Activated naive CD4-positive, alpha-beta T cell treated with anti-CD3 and anti-CD28 coated beads for 36 hours (primary cell): ENCODE measurements at regions of chr7 and their contacts with region 1.

Region 1: GRCh38 chr7:119175911-119176627 is 951.6 kb downstream of the ANKRD7 start:
- DNase-seq: peak; percentile 51
- H3K4me3 Mint-ChIP-seq: no peak overlapping the region
- H3K27ac Mint-ChIP-seq: no peak overlapping the region
- H3K4me1 Mint-ChIP-seq: no peaks in the 10 kb centered on the region
- H3K27me3 Mint-ChIP-seq: no peaks in the 10 kb centered on the region

Region 2: GRCh38 chr7:118259115-118259514 is 917.0 kb before region 1 on chr7:
- CTCF ChIA-PET with region 1: no interaction called
- intact Hi-C with region 1: loop called (anchors 1 kb)
- DNase-seq: no peak
- H3K4me3 Mint-ChIP-seq: no peak overlapping the region
- H3K27ac Mint-ChIP-seq: no peak overlapping the region
- H3K4me1 Mint-ChIP-seq: no peaks in the 10 kb centered on the region
- H3K27me3 Mint-ChIP-seq: peaks cover 4% of the 10 kb centered on the region

Region 3: DNA sequence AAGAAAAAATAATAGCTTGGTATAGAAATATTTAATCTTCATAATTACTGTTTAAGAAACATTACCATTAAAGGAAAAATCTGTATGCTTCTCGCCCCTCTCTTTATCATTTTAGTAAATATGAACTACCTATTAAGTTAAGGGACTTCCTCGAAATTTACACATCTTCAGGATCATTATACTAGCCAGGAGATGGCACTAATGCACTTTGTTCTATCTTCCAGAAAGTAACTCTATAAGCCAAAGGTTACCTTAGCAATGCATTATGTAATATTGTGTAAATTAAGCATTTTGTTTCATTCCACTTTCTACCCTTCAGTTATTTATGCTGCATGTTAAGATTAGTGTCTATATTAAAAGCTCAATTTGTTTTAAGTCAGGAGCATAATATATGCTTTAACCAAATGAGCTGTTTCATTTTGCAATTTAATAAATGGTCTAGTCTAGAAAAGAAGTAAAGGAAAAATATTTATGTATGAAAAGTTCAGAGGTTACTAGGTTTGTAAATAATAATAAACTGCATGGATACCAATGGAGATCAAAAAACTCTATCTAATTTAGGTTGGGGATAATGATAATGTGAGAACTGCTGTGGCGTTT is 823.1 kb before region 1 on chr7:
- CTCF ChIA-PET with region 1: no interaction called
- intact Hi-C with region 1: loop called (anchors 10 kb)
- DNase-seq: no peak
- H3K4me3 Mint-ChIP-seq: no peak overlapping the region
- H3K27ac Mint-ChIP-seq: no peak overlapping the region
- H3K4me1 Mint-ChIP-seq: no peaks in the 10 kb centered on the region
- H3K27me3 Mint-ChIP-seq: peaks cover 7% of the 10 kb centered on the region

Region 4: DNA sequence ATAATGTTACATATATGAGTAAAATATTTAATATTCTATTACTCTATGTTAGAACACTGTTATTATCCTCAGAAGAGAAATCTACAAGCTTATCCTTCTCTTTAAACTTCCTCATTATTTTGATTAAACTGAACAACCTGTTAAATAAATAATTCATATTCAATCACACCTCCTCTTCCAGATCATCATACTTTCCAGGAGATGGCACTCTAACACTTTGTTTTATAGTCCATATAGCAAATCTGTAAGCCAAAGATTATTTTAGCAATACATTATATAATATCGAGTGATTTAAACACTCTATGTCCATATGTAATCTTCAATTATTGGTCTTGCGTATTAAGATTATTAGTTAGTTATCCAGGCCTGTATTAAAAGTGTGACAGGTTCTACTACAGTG is 257.5 kb before region 1 on chr7:
- CTCF ChIA-PET with region 1: interaction called, 3 read pairs
- intact Hi-C with region 1: loop called (anchors 2 kb)
- DNase-seq: no peak
- H3K4me3 Mint-ChIP-seq: no peak overlapping the region
- H3K27ac Mint-ChIP-seq: no peak overlapping the region
- H3K4me1 Mint-ChIP-seq: no peaks in the 10 kb centered on the region
- H3K27me3 Mint-ChIP-seq: no peaks in the 10 kb centered on the region